ENCODE measurements at regions of chr17 and their contacts with region 1.

Region 1: DNA sequence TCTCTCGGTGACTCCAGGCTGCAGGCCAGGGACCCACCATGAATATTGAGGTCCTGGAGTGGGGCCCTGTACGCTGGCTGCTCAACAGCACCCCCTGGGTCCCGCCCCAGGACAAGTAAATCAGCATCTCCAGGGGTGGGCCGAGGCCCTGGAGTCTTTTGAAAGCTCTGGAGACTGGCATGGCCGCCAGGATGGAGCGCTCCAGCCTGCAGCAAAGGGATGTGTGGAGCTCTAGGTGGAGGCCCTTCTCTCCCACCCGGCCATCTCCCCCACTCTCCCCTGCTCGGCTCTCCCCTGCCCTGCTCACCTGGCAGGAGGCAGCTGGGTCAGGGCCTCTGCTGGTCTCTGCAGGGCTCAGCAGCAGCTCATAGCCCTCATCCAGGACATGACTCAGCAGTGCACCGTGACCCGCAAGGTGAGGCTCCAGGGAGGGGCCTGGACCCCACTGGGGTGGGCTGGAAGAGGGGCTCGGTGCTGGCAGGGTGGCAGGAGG is 16.6 kb downstream of the SGSH start:
- DNase-seq: no peak
- ATAC-seq: peak; percentile 33
- H3K4me3 Mint-ChIP-seq: no peak overlapping the region
- H3K27ac Mint-ChIP-seq: no peak overlapping the region
- H3K4me1 Mint-ChIP-seq: no peaks in the 10 kb centered on the region
- H3K27me3 Mint-ChIP-seq: no peaks in the 10 kb centered on the region
- CTCF ChIP-seq: no peak

Region 2: GRCh38 chr17:80189611-80190010 is 13.9 kb before region 1 on chr17:
- CTCF ChIA-PET with region 1: no interaction called
- POLR2A ChIA-PET with region 1: no interaction called
- DNase-seq: no peak
- ATAC-seq: no peak
- H3K4me3 Mint-ChIP-seq: no peak overlapping the region
- H3K27ac Mint-ChIP-seq: peak overlapping the region; percentile 60; the same call in 1 of the 2 replicates
- H3K4me1 Mint-ChIP-seq: no peaks in the 10 kb centered on the region
- H3K27me3 Mint-ChIP-seq: no peaks in the 10 kb centered on the region
- CTCF ChIP-seq: no peak

Region 3: GRCh38 chr17:80364216-80364618 is 160.7 kb after region 1 on chr17:
- CTCF ChIA-PET with region 1: interaction called, 10 read pairs
- POLR2A ChIA-PET with region 1: no interaction called
- DNase-seq: peak; percentile 68
- ATAC-seq: peak; percentile 60
- H3K4me3 Mint-ChIP-seq: no peak overlapping the region
- H3K27ac Mint-ChIP-seq: no peak overlapping the region
- H3K4me1 Mint-ChIP-seq: no peaks in the 10 kb centered on the region
- H3K27me3 Mint-ChIP-seq: no peaks in the 10 kb centered on the region
- CTCF ChIP-seq: peak; percentile 21; the same call in 1 of the 2 replicates